IMR-90 (cell line): ENCODE measurements at regions of chr7 and their contacts with region 1.

Region 1: DNA sequence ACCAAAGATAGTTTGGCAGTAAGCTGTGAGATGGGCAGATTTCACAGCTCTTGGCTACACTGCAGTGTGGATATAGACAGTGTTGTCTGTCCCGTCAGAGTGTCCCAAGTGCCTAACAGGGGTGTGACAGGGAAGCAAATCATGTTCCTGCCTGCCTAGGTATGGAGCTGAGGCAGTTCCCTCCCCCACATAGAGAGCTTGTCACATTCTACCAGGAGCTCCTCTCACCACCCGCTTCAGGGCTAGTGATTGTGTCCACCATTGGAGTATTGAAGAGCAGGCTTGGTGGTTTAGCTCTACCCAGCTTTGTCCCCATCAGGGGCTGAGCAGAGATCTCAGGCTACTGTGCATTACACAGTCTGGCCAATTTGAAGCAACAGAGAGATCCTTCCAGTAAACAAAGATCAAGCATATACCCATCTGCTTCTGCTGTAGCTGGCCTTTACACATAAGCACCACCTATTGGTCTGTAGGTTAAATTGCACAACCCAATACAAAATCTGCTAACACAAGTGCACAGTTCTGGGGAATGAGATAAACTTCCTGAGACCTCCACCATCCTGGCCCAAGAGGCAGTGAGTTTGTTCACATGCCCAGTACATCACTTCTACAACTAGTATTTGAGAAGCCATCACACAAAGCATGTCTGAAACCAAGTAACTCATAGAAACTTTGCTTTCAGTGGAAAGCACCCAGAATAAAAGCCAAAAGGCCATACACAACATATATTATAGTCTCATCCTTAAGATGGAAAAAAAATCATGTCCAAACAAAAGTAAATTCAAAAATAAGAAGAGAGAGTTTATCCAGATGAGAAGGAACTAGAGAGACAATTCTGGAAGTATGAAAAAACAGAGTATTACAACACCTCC is 67.3 kb downstream of the GLCCI1 start:
- DNase-seq: peak; percentile 55
- ATAC-seq: peak; percentile 88
- H3K4me3 ChIP-seq: no peak overlapping the region
- H3K27ac ChIP-seq: no peak overlapping the region
- H3K4me1 ChIP-seq: no peaks in the 10 kb centered on the region; the same call in 1 of the 2 replicates
- H3K27me3 ChIP-seq: no peaks in the 10 kb centered on the region
- CTCF ChIP-seq: peak; percentile 53
- POLR2A ChIP-seq: no peak
- RAD21 ChIP-seq: peak; percentile 54

Region 2: GRCh38 chr7:7640221-7641128 is 395.4 kb before region 1 on chr7 and contains the start of gene UMAD1:
- CTCF ChIA-PET with region 1: interaction called, 3 read pairs
- POLR2A ChIA-PET with region 1: no interaction called
- dilution Hi-C with region 1: no loop called
- in situ Hi-C with region 1: no loop called
- intact Hi-C with region 1: loop called (anchors 2 kb)
- DNase-seq: peak; percentile 98
- ATAC-seq: peak; percentile 97
- H3K4me3 ChIP-seq: peak within 1 kb of the TSS; percentile 78
- H3K27ac ChIP-seq: peak within 1 kb of the TSS; percentile 58
- H3K4me1 ChIP-seq: no peaks in the 10 kb centered on the region
- H3K27me3 ChIP-seq: no peaks in the 10 kb centered on the region
- CTCF ChIP-seq: no peak
- POLR2A ChIP-seq: peak; percentile 79; the same call in 1 of the 2 replicates
- RAD21 ChIP-seq: no peak
- total RNA-seq, gene UMAD1: 5.2 and 9.2 TPM in 2 replicates

Region 3: GRCh38 chr7:7681179-7681935 is 354.5 kb before region 1 on chr7:
- CTCF ChIA-PET with region 1: interaction called, 5 read pairs
- POLR2A ChIA-PET with region 1: no interaction called
- dilution Hi-C with region 1: no loop called
- in situ Hi-C with region 1: no loop called
- intact Hi-C with region 1: loop called (anchors 1 kb)
- DNase-seq: peak; percentile 61
- ATAC-seq: peak; percentile 89
- H3K4me3 ChIP-seq: no peak overlapping the region
- H3K27ac ChIP-seq: no peak overlapping the region
- H3K4me1 ChIP-seq: no peaks in the 10 kb centered on the region
- H3K27me3 ChIP-seq: no peaks in the 10 kb centered on the region
- CTCF ChIP-seq: peak; percentile 76
- POLR2A ChIP-seq: no peak
- RAD21 ChIP-seq: peak; percentile 78

Region 4: DNA sequence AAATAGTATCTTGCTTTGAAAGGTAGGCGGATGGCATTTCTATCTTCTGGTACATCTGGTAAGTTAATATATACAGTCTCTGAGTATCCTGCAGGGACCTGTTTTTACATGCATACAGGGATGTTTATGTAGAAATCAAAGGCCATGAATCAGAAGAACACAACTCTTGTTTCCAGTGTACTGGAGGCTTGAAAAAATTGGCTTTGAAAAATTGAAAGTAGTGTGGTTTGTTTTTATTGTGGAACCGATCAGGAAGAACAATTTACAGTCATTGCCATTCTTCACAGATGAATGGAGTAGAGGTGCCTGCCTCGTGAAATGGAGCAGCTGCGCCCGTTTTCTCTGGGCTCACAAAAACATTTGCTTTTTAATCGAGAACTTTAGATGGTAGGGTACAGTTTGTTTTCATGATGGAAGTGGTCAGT is 263.5 kb before region 1 on chr7:
- CTCF ChIA-PET with region 1: no interaction called
- POLR2A ChIA-PET with region 1: no interaction called
- dilution Hi-C with region 1: no loop called
- in situ Hi-C with region 1: no loop called
- intact Hi-C with region 1: loop called (anchors 5 kb)
- DNase-seq: peak; percentile 67
- ATAC-seq: peak; percentile 57
- H3K4me3 ChIP-seq: peak overlapping the region; percentile 19; the same call in 1 of the 2 replicates
- H3K27ac ChIP-seq: peak overlapping the region; percentile 55; the same call in 1 of the 2 replicates
- H3K4me1 ChIP-seq: peaks cover 15% of the 10 kb centered on the region
- H3K27me3 ChIP-seq: no peaks in the 10 kb centered on the region
- CTCF ChIP-seq: no peak
- POLR2A ChIP-seq: no peak
- RAD21 ChIP-seq: no peak